Right ventricle myocardium inferior (tissue), 1 donor: ENCODE measurements at regions of chr15 and their contacts with region 1.

Region 1: GRCh38 chr15:90174140-90174875 is 26.8 kb upstream of the SEMA4B start:
- DNase-seq: peak; percentile 92
- ATAC-seq: peak; percentile 86

Region 2: GRCh38 chr15:90184786-90185569 is 10.7 kb after region 1 on chr15:
- intact Hi-C with region 1: loop called (anchors 1 kb)
- DNase-seq: peak; percentile 82
- ATAC-seq: peak; percentile 86

Region 3: DNA sequence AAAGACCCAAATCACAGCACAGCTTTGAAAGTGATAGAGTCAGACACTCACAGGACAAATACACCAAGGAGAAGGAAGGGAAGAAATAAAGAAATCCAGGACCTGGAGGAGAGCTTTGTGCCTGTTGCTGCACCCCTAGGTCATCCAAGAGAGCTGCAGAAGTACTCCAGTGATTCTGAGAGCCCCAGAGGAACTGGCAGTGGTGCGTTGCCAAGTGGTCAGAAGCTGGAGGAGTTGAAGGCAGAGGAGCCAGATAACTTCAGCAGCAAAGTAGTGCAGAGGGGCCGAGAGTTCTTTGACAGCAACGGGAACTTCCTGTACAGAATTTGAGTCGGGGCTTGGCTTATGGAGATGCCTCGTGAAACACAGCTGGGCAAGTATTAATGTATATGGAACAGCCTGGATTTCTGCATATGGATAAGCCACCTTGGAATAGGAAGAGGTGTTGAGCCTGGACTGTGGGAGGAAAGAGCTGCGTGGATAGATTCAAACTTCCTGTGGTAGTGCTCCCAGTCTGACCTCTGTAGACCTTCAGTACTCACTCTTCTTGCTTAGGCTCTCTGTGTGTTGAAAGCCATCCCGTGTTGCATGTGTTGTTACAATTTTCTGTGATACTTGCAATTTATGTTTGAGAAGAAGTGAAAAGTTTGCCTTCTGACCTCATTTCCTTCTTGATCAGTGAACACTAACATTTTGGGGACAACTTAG is 97.3 kb after region 1 on chr15:
- intact Hi-C with region 1: no loop called
- DNase-seq: no peak
- ATAC-seq: peak; percentile 47